K562 (cell line): ENCODE measurements at regions of chr1 and their contacts with region 1.

Region 1: GRCh38 chr1:145990249-145991097 is 5.9 kb downstream of the TXNIP start:
- DNase-seq: no peak
- ATAC-seq: peak; percentile 29
- H3K4me3 ChIP-seq: no peak overlapping the region
- H3K27ac ChIP-seq: no peak overlapping the region
- H3K4me1 ChIP-seq: peaks cover 3 to 21% of the 10 kb centered on the region in 2 experiments; a peak in 4 of 5 replicates
- H3K27me3 ChIP-seq: no peaks in the 10 kb centered on the region
- CTCF ChIP-seq: no peak
- EP300 ChIP-seq: no peak
- POLR2A ChIP-seq: peak; percentile 37
- RAD21 ChIP-seq: no peak

Region 2: GRCh38 chr1:145858894-145859490 is 131.5 kb before region 1 on chr1 and contains the start of gene PIAS3:
- CTCF ChIA-PET with region 1: no interaction called
- POLR2A ChIA-PET with region 1: interaction called, 22 read pairs
- in situ Hi-C with region 1: no loop called
- intact Hi-C with region 1: no loop called
- DNase-seq: peak; percentile 94 to 97 (median 96)
- ATAC-seq: peak; percentile 95
- H3K4me3 ChIP-seq: peak within 1 kb of the TSS; percentile 82
- H3K27ac ChIP-seq: peak within 1 kb of the TSS; percentile 73
- H3K4me1 ChIP-seq: peaks cover 10 to 18% of the 10 kb centered on the region in 2 experiments; a peak in 4 of 5 replicates
- H3K27me3 ChIP-seq: no peaks in the 10 kb centered on the region
- CTCF ChIP-seq: no peak
- EP300 ChIP-seq: no peak
- POLR2A ChIP-seq: peak; percentile 67
- RAD21 ChIP-seq: no peak
- polyA plus RNA-seq, gene PIAS3: 1.1 to 1.5 TPM

Region 3: DNA sequence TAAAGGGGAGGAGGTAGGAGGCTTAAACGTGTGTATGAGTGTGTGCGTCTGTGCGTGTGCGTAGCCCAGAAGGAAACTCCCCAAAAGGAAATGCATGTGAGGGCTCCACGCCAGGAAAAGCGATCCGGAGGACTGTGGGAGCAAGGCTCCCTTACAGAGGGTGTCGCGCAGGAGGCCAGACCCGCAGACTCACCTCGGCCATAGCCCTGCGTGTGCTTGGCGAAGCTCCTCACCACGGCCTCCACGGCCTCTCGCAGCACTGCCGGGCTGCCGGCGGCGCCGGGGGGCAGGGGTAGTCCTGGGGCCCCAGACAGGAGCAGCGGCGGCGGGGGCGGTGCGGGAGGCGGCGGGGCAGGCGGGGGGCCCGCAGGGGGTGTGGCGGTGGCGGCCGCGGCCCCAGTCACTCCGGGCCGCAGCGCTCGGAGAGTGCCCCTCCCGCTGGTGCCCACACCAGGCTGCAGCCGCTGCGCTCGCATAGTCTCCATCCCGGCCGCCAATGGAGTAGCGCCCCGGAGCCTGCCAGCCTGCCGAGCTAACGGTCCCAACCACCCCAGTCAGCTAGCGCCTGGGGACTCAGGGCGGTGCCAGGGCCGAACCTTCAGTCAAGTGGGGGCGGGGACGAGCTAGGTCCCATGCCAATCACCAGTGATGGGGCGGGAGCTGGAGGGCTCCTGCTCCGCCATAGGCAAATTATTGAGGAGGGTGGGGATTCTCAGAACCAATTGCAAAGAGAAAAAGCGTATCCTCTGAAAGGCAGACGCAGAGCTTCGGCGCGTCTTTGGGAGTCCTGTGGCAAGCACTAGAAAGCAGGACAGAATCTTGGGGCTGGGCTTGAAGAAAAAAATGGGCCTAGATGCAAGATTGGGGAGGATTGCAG is 32.8 kb before region 1 on chr1 and contains the start of gene LIX1L:
- CTCF ChIA-PET with region 1: no interaction called
- POLR2A ChIA-PET with region 1: interaction called, 50 read pairs
- in situ Hi-C with region 1: no loop called
- intact Hi-C with region 1: no loop called
- DNase-seq: peak; percentile 87 to 97 (median 92)
- ATAC-seq: peak; percentile 97
- H3K4me3 ChIP-seq: peak within 1 kb of the TSS; percentile 79
- H3K27ac ChIP-seq: peak within 1 kb of the TSS; percentile 74
- H3K4me1 ChIP-seq: peaks cover 25 to 30% of the 10 kb centered on the region in 2 experiments; a peak in 4 of 5 replicates
- H3K27me3 ChIP-seq: no peaks in the 10 kb centered on the region; a peak in 1 of 5 replicates
- CTCF ChIP-seq: no peak
- EP300 ChIP-seq: no peak; the same call in 1 of the 2 replicates
- POLR2A ChIP-seq: peak; percentile 69
- RAD21 ChIP-seq: no peak
- polyA plus RNA-seq, gene LIX1L: 4.6 to 9.2 TPM

Region 4: DNA sequence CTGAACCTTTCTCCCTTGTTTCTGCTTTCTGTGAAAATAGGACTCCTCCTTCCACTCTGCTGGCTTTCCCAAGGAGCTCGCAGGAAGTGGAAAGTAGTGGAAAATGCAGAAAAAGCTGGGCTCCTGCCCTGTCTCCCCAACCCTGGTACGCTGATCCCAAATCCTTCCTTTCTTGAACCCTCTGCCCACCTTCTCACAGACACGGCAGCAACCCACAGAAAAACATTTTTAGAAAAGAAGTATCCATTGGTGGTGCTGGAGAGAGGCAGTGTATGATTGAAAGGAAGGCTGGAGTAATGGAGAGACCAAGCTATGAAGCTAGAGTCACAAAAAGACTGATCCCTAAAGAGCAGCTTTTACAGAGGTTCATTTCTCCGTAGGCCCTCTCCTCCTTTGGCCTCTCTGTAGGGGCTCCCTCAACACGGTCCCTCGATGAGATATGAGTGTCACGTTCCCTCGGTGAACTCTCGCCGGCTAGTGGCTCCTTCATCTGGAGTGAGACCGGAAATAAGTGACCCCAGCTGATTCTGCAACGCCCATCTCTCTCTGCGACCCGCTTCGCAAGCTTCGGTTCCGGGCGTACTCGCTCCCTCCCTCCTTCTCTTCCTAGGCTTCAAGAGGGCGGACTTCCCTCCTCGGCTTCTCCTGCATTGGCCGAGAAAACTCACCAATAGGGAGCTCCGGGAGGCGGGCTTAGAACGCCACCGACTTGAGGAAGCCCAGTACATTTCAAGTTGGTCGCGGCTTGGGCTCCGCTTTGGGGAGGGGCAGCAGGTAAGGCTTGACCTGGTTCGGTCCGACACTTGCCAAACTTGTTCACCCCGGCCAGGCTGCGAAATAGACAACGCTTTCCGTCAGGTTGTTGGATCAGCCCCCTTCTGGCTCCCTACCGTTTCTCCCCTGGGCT is 26.2 kb before region 1 on chr1 and contains the starts of genes ANKRD34A and POLR3GL:
- CTCF ChIA-PET with region 1: no interaction called
- POLR2A ChIA-PET with region 1: interaction called, 50 read pairs
- in situ Hi-C with region 1: no loop called
- intact Hi-C with region 1: no loop called
- DNase-seq: peak; percentile 92 to 98 (median 94)
- ATAC-seq: peak; percentile 98
- H3K4me3 ChIP-seq: peak within 1 kb of the TSS; percentile 63
- H3K27ac ChIP-seq: peak within 1 kb of the TSS; percentile 87
- H3K4me1 ChIP-seq: peaks cover 23 to 36% of the 10 kb centered on the region in 2 experiments; a peak in 4 of 5 replicates
- H3K27me3 ChIP-seq: no peaks in the 10 kb centered on the region; a peak in 1 of 5 replicates
- CTCF ChIP-seq: no peak
- EP300 ChIP-seq: no peak
- POLR2A ChIP-seq: peak; percentile 94
- RAD21 ChIP-seq: no peak
- polyA plus RNA-seq, gene ANKRD34A: 0.06 to 0.07 TPM
- polyA plus RNA-seq, gene POLR3GL: 14.6 to 21.7 TPM

Region 5: DNA sequence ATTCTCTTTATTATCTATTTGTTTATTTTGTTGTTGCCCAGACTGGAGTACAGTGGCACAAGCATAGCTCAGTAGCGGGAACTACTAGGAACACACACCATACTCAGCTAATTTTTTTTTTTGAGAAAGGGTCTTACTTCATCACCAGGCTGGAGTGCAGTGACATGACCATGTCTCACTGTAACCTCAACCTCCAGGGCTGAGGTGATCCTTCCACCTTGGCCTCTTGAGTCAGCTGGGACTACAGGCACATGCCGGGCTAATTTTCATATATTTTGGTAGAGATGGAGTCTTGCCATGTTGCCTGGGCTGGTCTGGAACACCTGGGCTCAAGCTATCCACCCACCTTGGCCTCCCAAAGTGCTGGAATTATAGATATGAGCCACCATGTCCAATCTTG is 11.2 kb after region 1 on chr1:
- CTCF ChIA-PET with region 1: interaction called, 3 read pairs
- POLR2A ChIA-PET with region 1: interaction called, 320 read pairs
- in situ Hi-C with region 1: no loop called
- intact Hi-C with region 1: loop called (anchors 2 kb)
- DNase-seq: no peak
- ATAC-seq: no peak
- H3K4me3 ChIP-seq: no peak overlapping the region
- H3K27ac ChIP-seq: no peak overlapping the region
- H3K4me1 ChIP-seq: peaks cover 20 to 37% of the 10 kb centered on the region in 2 experiments; a peak in 4 of 5 replicates
- H3K27me3 ChIP-seq: no peaks in the 10 kb centered on the region
- CTCF ChIP-seq: no peak
- EP300 ChIP-seq: no peak
- POLR2A ChIP-seq: no peak
- RAD21 ChIP-seq: no peak

Region 6: GRCh38 chr1:146007506-146008133 is 17.1 kb after region 1 on chr1:
- CTCF ChIA-PET with region 1: interaction called, 3 read pairs
- POLR2A ChIA-PET with region 1: interaction called, 25 read pairs
- in situ Hi-C with region 1: no loop called
- intact Hi-C with region 1: loop called (anchors 2 kb)
- DNase-seq: no peak
- ATAC-seq: no peak
- H3K4me3 ChIP-seq: no peak overlapping the region
- H3K27ac ChIP-seq: peak overlapping the region; percentile 94; the same call in 2 of the 3 replicates
- H3K4me1 ChIP-seq: peaks cover 11 to 14% of the 10 kb centered on the region in 2 experiments
- H3K27me3 ChIP-seq: no peaks in the 10 kb centered on the region
- CTCF ChIP-seq: no peak
- EP300 ChIP-seq: no peak
- POLR2A ChIP-seq: no peak
- RAD21 ChIP-seq: no peak

Region 7: GRCh38 chr1:146036965-146037646 is 46.6 kb after region 1 on chr1:
- CTCF ChIA-PET with region 1: no interaction called
- POLR2A ChIA-PET with region 1: interaction called, 19 read pairs
- in situ Hi-C with region 1: no loop called
- intact Hi-C with region 1: no loop called
- DNase-seq: peak; percentile 39 to 92 (median 53)
- ATAC-seq: peak; percentile 65
- H3K4me3 ChIP-seq: peak overlapping the region; percentile 78
- H3K27ac ChIP-seq: peak overlapping the region; percentile 96
- H3K4me1 ChIP-seq: peaks cover 5 to 8% of the 10 kb centered on the region in 2 experiments; a peak in 3 of 5 replicates
- H3K27me3 ChIP-seq: no peaks in the 10 kb centered on the region
- CTCF ChIP-seq: no peak
- EP300 ChIP-seq: peak; percentile 75
- POLR2A ChIP-seq: no peak
- RAD21 ChIP-seq: peak in 1 of 2 experiments; percentile 9; a peak in 1 of 4 replicates

Region 8: DNA sequence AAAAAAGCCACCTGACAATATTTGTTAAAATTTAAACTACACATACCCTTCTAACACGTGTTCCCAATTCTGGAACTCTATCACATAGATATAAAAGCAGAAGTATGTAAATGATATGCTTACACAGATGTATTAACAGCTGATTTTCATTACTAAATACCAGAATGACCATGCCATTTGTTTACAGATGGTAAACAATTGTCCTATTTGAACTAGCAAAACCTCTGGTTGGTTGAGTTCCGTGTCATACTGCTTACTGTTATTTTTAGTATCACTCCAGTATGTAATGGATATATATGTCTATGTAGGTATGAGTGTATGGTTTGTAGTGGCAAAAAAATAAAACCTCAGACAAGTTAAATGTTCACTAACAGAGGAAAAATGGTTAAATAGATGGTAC is 1322.8 kb after region 1 on chr1:
- CTCF ChIA-PET with region 1: no interaction called
- POLR2A ChIA-PET with region 1: no interaction called
- in situ Hi-C with region 1: no loop called
- intact Hi-C with region 1: no loop called
- DNase-seq: no peak
- ATAC-seq: no peak
- H3K4me3 ChIP-seq: no peak overlapping the region
- H3K27ac ChIP-seq: no peak overlapping the region
- H3K4me1 ChIP-seq: no peaks in the 10 kb centered on the region
- H3K27me3 ChIP-seq: no peaks in the 10 kb centered on the region
- CTCF ChIP-seq: no peak
- EP300 ChIP-seq: no peak
- POLR2A ChIP-seq: no peak
- RAD21 ChIP-seq: no peak